Naive thymus-derived CD4-positive, alpha-beta T cell (primary cell): ENCODE measurements at regions of chr7 and their contacts with region 1.

Region 1: DNA sequence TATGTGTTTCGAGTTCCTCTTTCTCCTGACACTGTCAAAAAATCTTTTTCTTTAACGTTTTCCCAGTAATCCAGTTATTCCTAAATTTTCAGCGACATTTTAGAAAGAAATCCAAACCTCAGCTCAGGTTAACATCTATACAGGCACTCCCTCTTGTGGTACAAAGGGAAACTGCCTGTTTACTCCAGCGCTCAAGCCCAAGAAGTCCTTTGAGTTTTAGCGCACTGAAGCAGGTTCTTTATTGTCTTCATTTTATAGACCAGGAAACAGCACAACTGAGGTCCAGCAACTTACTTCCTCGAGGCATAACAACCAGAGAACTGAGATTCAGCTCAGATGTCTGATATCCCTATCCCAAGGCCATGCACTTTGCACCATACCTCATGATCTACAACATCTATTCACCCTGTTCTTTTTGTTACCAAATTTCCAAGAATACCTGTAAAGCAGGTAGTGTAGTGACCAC is 287.2 kb upstream of the MKLN1 start:
- DNase-seq: peak in 7 of 9 donors; percentile 31 to 63 (median 56)
- ATAC-seq: peak; percentile 71
- H3K4me3 ChIP-seq: no peak overlapping the region
- H3K4me3 Mint-ChIP-seq: peak overlapping the region; percentile 16 to 84 (median 60)
- H3K27ac ChIP-seq: no peak overlapping the region
- H3K27ac Mint-ChIP-seq: peak overlapping the region; percentile 29 to 82 (median 54)
- H3K4me1 ChIP-seq: peaks cover 14 to 27% of the 10 kb centered on the region in 2 donors
- H3K4me1 Mint-ChIP-seq: peaks cover 44 to 78% (median 68%) of the 10 kb centered on the region in 7 donors
- H3K27me3 ChIP-seq: no peaks in the 10 kb centered on the region
- H3K27me3 Mint-ChIP-seq: no peaks in the 10 kb centered on the region

Region 2: DNA sequence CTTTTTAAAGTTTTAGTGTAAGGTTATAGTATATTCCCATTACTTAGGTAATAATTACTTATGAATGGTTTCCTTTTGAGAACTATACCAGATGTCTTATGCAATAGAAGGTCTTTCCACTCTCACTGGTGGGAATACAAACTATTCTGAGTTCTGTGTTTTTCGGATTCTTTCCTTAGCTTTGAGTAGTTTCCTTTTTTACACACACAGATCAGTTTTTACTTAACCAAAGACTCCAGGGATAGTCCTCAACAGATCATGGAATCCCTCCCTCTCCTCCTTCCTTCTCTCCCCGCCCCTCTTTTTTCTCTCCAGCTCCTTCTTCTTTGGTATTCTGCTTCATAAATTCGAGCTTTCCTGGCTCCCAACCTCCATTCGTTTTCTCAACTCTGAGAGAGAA is 385.2 kb before region 1 on chr7:
- CTCF ChIA-PET with region 1: no interaction called
- POLR2A ChIA-PET with region 1: no interaction called
- intact Hi-C with region 1: loop called in 1 of 2 experiments (anchors 5 kb)
- DNase-seq: no peak
- ATAC-seq: no peak
- H3K4me3 ChIP-seq: no peak overlapping the region
- H3K4me3 Mint-ChIP-seq: no peak overlapping the region
- H3K27ac ChIP-seq: no peak overlapping the region
- H3K27ac Mint-ChIP-seq: no peak overlapping the region
- H3K4me1 ChIP-seq: no peaks in the 10 kb centered on the region
- H3K4me1 Mint-ChIP-seq: peaks cover 0 to 8% (median 0%) of the 10 kb centered on the region in 7 donors
- H3K27me3 ChIP-seq: no peaks in the 10 kb centered on the region
- H3K27me3 Mint-ChIP-seq: no peaks in the 10 kb centered on the region

Region 3: GRCh38 chr7:131057015-131057793 is 16.7 kb after region 1 on chr7:
- CTCF ChIA-PET with region 1: interaction called, 7 read pairs
- POLR2A ChIA-PET with region 1: no interaction called
- intact Hi-C with region 1: loop called in 1 of 2 experiments (anchors 1 kb)
- DNase-seq: peak in 7 of 9 donors; percentile 56 to 82 (median 76)
- ATAC-seq: peak; percentile 67
- H3K4me3 ChIP-seq: peak overlapping the region; percentile 11
- H3K4me3 Mint-ChIP-seq: peak overlapping the region; percentile 72 to 93 (median 82)
- H3K27ac ChIP-seq: peak overlapping the region; percentile 76
- H3K27ac Mint-ChIP-seq: peak overlapping the region; percentile 94 to 100 (median 98)
- H3K4me1 ChIP-seq: peaks cover 69 to 77% of the 10 kb centered on the region in 2 donors
- H3K4me1 Mint-ChIP-seq: peaks cover 54 to 87% (median 72%) of the 10 kb centered on the region in 7 donors
- H3K27me3 ChIP-seq: no peaks in the 10 kb centered on the region
- H3K27me3 Mint-ChIP-seq: no peaks in the 10 kb centered on the region